Heart right ventricle (tissue), 16 donors: ENCODE measurements at regions of chr7 and their contacts with region 1.

Region 1: GRCh38 chr7:135645296-135645904 is 16.9 kb upstream of the STMP1 start:
- DNase-seq: peak in 1 of 2 donors; percentile 28
- ATAC-seq: peak in 6 of 8 donors; percentile 42 to 70 (median 46)
- H3K4me3 ChIP-seq: no peak overlapping the region
- H3K27ac ChIP-seq: no peak overlapping the region
- H3K4me1 ChIP-seq: no peaks in the 10 kb centered on the region
- H3K27me3 ChIP-seq: no peaks in the 10 kb centered on the region
- CTCF ChIP-seq: peak; percentile 43 to 76 (median 72)

Region 2: GRCh38 chr7:135274495-135275268 is 370.7 kb before region 1 on chr7:
- intact Hi-C with region 1: loop called in 2 of 10 experiments (anchors 5 to 10 kb)
- DNase-seq: peak; percentile 31 to 53
- ATAC-seq: peak; percentile 47 to 81 (median 70)
- H3K4me3 ChIP-seq: no peak overlapping the region
- H3K27ac ChIP-seq: no peak overlapping the region
- H3K4me1 ChIP-seq: peaks cover 0 to 5% (median 0%) of the 10 kb centered on the region in 9 donors
- H3K27me3 ChIP-seq: peaks cover 0 to 13% (median 7%) of the 10 kb centered on the region in 7 donors
- CTCF ChIP-seq: peak; percentile 78 to 93 (median 89)

Region 3: GRCh38 chr7:135525426-135525825 is 120.0 kb before region 1 on chr7:
- intact Hi-C with region 1: no loop called
- DNase-seq: no peak
- ATAC-seq: no peak
- H3K4me3 ChIP-seq: no peak overlapping the region
- H3K27ac ChIP-seq: no peak overlapping the region
- H3K4me1 ChIP-seq: no peaks in the 10 kb centered on the region
- H3K27me3 ChIP-seq: no peaks in the 10 kb centered on the region
- CTCF ChIP-seq: no peak

Region 4: DNA sequence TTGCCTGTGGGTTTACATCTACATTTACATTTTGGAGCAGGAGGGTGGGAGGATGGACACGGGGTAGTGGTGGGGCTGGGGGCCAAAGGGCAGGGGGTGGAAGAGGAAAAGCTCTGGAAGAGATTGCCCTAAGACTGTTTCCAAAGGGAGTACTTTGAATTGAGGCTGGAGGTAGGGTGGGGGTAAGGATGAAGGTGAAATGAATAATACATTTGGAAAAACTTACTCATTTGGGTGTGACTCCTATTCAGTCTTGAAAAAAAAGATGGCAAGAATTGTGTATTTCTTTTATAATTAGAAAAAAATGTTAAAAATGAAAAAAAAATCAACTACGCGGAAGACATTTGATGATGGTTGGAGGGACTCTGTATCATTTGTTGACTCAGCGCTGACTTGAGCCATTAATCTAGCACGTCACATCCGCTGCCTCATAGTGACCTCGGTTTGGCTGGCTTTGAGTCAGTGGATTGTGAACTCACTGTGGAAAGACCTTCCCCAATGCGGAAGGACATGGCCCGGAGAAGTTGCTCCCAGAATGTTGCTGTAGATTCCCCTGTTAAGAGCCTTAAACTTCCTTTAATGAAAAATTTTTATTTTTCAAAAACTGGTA is 100.4 kb after region 1 on chr7:
- intact Hi-C with region 1: no loop called
- DNase-seq: peak in 1 of 2 donors; percentile 76
- ATAC-seq: peak in 7 of 8 donors; percentile 33 to 77 (median 57)
- H3K4me3 ChIP-seq: peak overlapping the region in 3 of 10 donors; percentile 2 to 52 (median 43)
- H3K27ac ChIP-seq: peak overlapping the region in 6 of 10 donors; percentile 62 to 91 (median 76)
- H3K4me1 ChIP-seq: peaks cover 7 to 62% (median 20%) of the 10 kb centered on the region in 9 donors
- H3K27me3 ChIP-seq: no peaks in the 10 kb centered on the region
- CTCF ChIP-seq: no peak